T-cell (primary cell): ENCODE measurements at regions of chr2 and their contacts with region 1.

Region 1: GRCh38 chr2:59366288-59366687 is 1125.2 kb upstream of the FANCL start:
- DNase-seq: no peak
- ATAC-seq: no peak
- H3K4me3 ChIP-seq: no peak overlapping the region
- H3K4me3 Mint-ChIP-seq: no peak overlapping the region
- H3K27ac ChIP-seq: no peak overlapping the region
- H3K27ac Mint-ChIP-seq: no peak overlapping the region
- H3K4me1 ChIP-seq: no peaks in the 10 kb centered on the region
- H3K4me1 Mint-ChIP-seq: no peaks in the 10 kb centered on the region
- H3K27me3 ChIP-seq: no peaks in the 10 kb centered on the region
- H3K27me3 Mint-ChIP-seq: no peaks in the 10 kb centered on the region

Region 2: DNA sequence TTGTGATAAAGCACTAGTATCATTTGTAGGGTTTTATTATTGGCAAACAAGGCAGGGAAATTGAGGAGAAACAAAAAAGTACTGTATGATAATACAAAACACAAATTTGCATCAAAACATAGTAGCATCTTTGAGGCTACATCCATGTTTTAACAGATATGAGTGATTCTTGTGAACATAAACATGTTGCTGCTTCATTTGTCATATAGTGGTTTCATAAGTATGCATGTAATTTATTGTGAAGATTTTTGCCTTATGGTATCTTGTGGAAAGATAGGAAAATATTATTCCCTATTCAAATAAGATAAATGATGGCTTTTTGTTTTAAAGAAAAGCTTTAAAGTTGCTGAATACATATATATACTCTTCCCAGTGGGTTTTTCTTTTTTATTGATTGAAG is 1259.4 kb before region 1 on chr2:
- CTCF ChIA-PET with region 1: interaction called in 1 of 2 experiments, 12 read pairs
- POLR2A ChIA-PET with region 1: no interaction called
- DNase-seq: no peak
- ATAC-seq: no peak
- H3K4me3 ChIP-seq: no peak overlapping the region
- H3K4me3 Mint-ChIP-seq: no peak overlapping the region
- H3K27ac ChIP-seq: no peak overlapping the region
- H3K27ac Mint-ChIP-seq: no peak overlapping the region
- H3K4me1 ChIP-seq: no peaks in the 10 kb centered on the region
- H3K4me1 Mint-ChIP-seq: peaks cover 0 to 11% (median 2%) of the 10 kb centered on the region in 3 donors
- H3K27me3 ChIP-seq: no peaks in the 10 kb centered on the region
- H3K27me3 Mint-ChIP-seq: no peaks in the 10 kb centered on the region

Region 3: DNA sequence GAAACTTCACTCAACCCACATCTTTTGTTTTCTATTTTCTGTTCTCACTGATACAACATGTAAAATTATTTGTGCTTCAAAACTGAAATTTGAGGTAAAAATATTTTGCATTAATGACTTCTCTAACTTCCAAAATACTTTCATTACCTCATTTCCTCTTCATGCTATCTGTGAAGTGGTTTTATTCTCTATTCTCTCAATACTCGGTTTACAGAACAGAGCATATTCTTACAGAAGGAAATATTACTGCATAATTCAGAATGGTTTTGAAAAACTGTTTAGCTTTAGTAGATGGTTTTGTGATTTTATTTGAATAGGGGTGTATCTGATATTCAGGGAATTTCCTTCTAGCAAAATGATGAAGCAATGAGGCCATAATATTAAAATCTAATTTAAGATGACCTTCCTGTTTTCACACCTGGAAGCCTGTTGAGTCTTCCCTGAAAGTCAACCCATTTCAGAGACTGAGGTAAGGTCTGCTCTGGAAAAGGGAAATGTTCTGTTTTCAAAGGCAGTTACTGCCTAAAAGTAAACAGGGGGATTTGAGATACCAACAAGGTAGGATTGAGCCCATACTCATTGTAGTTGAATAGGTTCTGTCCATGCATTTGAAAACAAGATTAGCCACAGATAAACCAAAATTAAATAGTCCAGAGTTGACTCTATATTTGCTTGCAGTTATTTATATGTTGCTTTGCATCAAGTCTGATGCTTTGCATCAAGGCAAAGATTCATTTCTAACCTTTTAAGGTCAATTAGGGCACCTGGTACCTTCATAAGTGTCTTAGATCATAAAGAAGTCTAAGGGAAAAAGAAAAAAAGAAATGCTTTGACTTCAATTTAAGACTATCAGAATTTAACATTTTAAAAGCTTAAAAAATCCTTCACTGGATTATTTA is 1600.5 kb after region 1 on chr2:
- CTCF ChIA-PET with region 1: no interaction called
- POLR2A ChIA-PET with region 1: no interaction called
- DNase-seq: peak in 1 of 35 experiments; percentile 16
- ATAC-seq: peak in 2 of 4 experiments; percentile 36 to 70
- H3K4me3 ChIP-seq: no peak overlapping the region
- H3K4me3 Mint-ChIP-seq: peak overlapping the region in 2 of 3 donors; percentile 55 to 67
- H3K27ac ChIP-seq: peak overlapping the region; percentile 77
- H3K27ac Mint-ChIP-seq: peak overlapping the region; percentile 26 to 89
- H3K4me1 ChIP-seq: peaks cover 9 to 26% of the 10 kb centered on the region in 2 experiments
- H3K4me1 Mint-ChIP-seq: peaks cover 37 to 52% (median 50%) of the 10 kb centered on the region in 3 donors
- H3K27me3 ChIP-seq: no peaks in the 10 kb centered on the region
- H3K27me3 Mint-ChIP-seq: no peaks in the 10 kb centered on the region